Endothelial cell of umbilical vein (primary cell): ENCODE measurements at regions of chr9 and their contacts with region 1.

Region 1: GRCh38 chr9:110143950-110144545 is 63.9 kb downstream of the C9orf152 start:
- DNase-seq: no peak
- H3K4me3 ChIP-seq: no peak overlapping the region
- H3K27ac ChIP-seq: peak overlapping the region; percentile 1
- H3K4me1 ChIP-seq: peaks cover 42% of the 10 kb centered on the region
- H3K27me3 ChIP-seq: no peaks in the 10 kb centered on the region
- CTCF ChIP-seq: no peak
- POLR2A ChIP-seq: no peak

Region 2: DNA sequence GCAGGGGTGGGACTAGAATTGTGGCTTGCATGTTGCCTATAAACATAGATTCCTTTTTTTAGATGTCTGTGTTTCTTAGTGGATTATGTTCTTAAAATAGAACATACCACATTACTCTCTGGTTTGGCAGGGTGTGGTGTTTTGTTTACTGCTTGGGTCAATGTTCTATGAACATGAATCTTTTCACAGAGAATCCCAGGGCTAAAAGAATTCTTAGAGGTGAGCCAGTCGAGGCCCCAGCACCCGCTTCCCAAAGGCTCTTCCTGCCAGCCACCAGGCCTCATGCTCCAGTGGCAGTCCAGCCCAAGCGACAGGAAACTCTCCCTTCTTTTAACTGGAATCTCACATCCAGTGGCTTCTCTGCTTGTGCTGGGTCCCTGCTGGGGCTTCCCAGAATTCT is 62.7 kb before region 1 on chr9:
- CTCF ChIA-PET with region 1: interaction called, 3 read pairs
- POLR2A ChIA-PET with region 1: interaction called, 11 read pairs
- dilution Hi-C with region 1: no loop called
- intact Hi-C with region 1: no loop called
- DNase-seq: no peak
- H3K4me3 ChIP-seq: no peak overlapping the region
- H3K27ac ChIP-seq: peak overlapping the region; percentile 3
- H3K4me1 ChIP-seq: peaks cover 39% of the 10 kb centered on the region
- H3K27me3 ChIP-seq: no peaks in the 10 kb centered on the region
- CTCF ChIP-seq: no peak
- POLR2A ChIP-seq: no peak

Region 3: GRCh38 chr9:110125207-110125751 is 18.8 kb before region 1 on chr9:
- CTCF ChIA-PET with region 1: interaction called, 4 read pairs
- POLR2A ChIA-PET with region 1: no interaction called
- dilution Hi-C with region 1: no loop called
- intact Hi-C with region 1: loop called (anchors 2 kb)
- DNase-seq: peak; percentile 81
- H3K4me3 ChIP-seq: no peak overlapping the region
- H3K27ac ChIP-seq: peak overlapping the region; percentile 79
- H3K4me1 ChIP-seq: peaks cover 60% of the 10 kb centered on the region
- H3K27me3 ChIP-seq: no peaks in the 10 kb centered on the region
- CTCF ChIP-seq: no peak
- POLR2A ChIP-seq: no peak

Region 4: DNA sequence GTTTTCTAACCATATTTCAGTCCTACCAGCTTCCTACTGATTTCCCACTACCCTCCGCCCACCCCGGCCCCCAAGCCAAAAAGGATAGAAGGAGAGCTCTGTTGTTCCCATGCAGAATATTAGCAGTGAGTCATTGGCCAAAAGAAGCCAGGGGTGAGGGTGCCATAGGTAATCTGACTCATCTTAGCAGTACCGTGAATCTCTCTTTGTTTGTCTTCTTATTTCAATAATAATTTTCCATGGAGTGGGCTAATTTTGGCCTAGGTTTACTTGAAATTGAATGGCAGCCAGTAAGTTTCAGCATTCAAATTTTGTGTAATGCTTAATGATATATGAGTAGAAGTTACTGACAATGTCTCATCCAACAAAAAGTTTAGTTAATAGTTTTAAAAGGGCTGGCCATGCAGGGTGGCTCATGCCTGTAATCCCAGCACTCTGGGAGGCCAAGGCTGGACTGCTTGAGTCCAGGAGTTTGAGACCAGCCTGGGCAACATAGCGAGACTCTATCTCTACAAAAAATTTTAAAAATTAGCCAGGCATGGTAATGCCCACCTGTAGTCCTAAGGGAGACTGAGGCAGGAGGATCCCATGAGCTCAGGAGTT is 10.3 kb before region 1 on chr9:
- CTCF ChIA-PET with region 1: interaction called, 5 read pairs
- POLR2A ChIA-PET with region 1: no interaction called
- dilution Hi-C with region 1: no loop called
- intact Hi-C with region 1: loop called (anchors 1 kb)
- DNase-seq: no peak
- H3K4me3 ChIP-seq: no peak overlapping the region
- H3K27ac ChIP-seq: peak overlapping the region; percentile 8
- H3K4me1 ChIP-seq: peaks cover 54% of the 10 kb centered on the region
- H3K27me3 ChIP-seq: no peaks in the 10 kb centered on the region
- CTCF ChIP-seq: no peak
- POLR2A ChIP-seq: no peak